Activated CD4-positive, alpha-beta T cell treated with anti-CD3 and anti-CD28 coated beads for 36 hours (primary cell): ENCODE measurements at regions of chr18 and their contacts with region 1.

Region 1: DNA sequence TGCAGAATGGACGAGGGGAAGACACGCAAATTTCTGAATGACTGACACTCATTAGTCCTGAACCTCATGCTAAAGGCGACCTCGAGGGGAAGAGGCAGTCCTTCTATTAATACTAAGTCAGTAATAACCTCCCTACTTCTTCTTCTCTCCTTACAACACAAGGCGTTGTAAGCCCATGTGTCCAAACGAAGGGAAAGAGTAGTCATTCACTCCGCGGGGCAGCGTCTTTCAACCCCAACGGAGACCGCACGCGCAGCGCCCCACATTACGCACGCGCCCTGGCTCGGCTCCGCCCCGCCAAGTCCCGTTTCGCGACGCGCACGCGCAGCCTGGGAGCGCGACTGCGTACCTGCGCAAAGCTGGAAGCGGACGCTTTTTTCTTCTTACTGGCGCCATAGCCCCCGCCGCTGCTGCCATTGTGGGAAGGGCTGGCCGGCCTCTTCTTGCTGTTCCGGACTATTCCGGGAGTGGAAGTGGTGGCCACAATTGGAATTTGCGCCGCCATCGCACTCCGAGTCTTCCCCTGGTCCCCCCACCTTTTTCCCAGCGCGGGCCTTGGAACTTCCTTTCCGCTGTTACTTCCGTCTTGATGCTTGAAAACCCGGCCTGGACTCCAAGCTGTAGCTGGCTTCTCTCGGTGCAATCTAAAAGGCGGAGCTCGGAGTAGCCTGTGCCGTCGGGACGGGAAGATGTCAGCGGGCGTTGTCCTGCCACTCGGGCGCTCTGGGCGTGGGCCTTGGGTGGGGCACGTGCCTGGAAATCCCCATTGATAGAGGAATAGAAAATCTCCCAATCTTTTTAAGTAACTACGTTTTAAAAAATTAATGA is at the start of gene INO80C:
- DNase-seq: peak; percentile 96
- ATAC-seq: peak; percentile 95
- H3K4me3 Mint-ChIP-seq: peak within 1 kb of the TSS; percentile 85
- H3K27ac Mint-ChIP-seq: peak within 1 kb of the TSS; percentile 97
- H3K4me1 Mint-ChIP-seq: peaks cover 33% of the 10 kb centered on the region
- H3K27me3 Mint-ChIP-seq: no peaks in the 10 kb centered on the region
- total RNA-seq, gene INO80C: 30.8 to 37.4 TPM

Region 2: GRCh38 chr18:34976899-34977837 is 520.4 kb before region 1 on chr18:
- CTCF ChIA-PET with region 1: no interaction called
- POLR2A ChIA-PET with region 1: no interaction called
- intact Hi-C with region 1: loop called in 1 of 2 experiments (anchors 2 kb)
- DNase-seq: peak; percentile 85
- ATAC-seq: peak; percentile 55
- H3K4me3 Mint-ChIP-seq: peak overlapping the region; percentile 73
- H3K27ac Mint-ChIP-seq: no peak overlapping the region
- H3K4me1 Mint-ChIP-seq: peaks cover 23% of the 10 kb centered on the region
- H3K27me3 Mint-ChIP-seq: peaks cover 32% of the 10 kb centered on the region

Region 3: GRCh38 chr18:35290073-35290735 is 207.4 kb before region 1 on chr18 and contains the start of gene ZSCAN30:
- CTCF ChIA-PET with region 1: interaction called, 4 read pairs
- POLR2A ChIA-PET with region 1: no interaction called
- intact Hi-C with region 1: loop called (anchors 1 kb)
- DNase-seq: peak; percentile 97
- ATAC-seq: peak; percentile 97
- H3K4me3 Mint-ChIP-seq: peak within 1 kb of the TSS; percentile 96
- H3K27ac Mint-ChIP-seq: peak within 1 kb of the TSS; percentile 96
- H3K4me1 Mint-ChIP-seq: peaks cover 45% of the 10 kb centered on the region
- H3K27me3 Mint-ChIP-seq: no peaks in the 10 kb centered on the region
- total RNA-seq, gene ZSCAN30: 24.2 to 25.4 TPM

Region 4: DNA sequence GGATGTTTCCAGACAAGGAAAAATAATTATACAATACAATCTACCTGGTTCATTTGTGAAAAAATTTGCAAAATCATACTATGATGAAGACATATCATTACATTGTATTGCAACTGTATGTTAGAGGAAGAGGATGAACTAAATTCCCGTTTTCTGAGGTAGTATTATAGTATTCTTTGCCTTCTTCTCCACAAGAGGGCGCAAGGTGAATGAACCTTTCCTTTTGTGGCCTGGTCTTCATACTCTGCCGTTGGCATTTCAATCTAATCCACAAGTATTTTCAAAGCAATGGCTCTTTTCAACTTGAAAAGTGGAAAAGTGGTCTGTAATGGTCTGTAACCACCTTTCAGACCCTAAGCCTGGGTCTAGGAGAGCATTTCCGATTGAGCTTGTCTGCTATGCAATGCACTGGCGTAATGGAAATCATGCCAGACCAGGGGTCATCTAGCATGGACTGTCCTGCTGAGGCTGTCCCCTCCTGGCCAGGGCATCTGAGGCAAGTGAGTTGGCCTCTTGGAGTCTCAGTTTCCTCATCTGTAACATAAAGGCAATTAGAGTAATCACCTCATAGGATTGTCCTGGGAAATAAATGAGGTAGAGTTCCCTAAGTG is 89.6 kb before region 1 on chr18:
- CTCF ChIA-PET with region 1: no interaction called
- POLR2A ChIA-PET with region 1: no interaction called
- intact Hi-C with region 1: loop called in 1 of 2 experiments (anchors 5 kb)
- DNase-seq: peak; percentile 49
- ATAC-seq: peak; percentile 92
- H3K4me3 Mint-ChIP-seq: no peak overlapping the region
- H3K27ac Mint-ChIP-seq: no peak overlapping the region
- H3K4me1 Mint-ChIP-seq: peaks cover 10% of the 10 kb centered on the region
- H3K27me3 Mint-ChIP-seq: peaks cover 6% of the 10 kb centered on the region

Region 5: DNA sequence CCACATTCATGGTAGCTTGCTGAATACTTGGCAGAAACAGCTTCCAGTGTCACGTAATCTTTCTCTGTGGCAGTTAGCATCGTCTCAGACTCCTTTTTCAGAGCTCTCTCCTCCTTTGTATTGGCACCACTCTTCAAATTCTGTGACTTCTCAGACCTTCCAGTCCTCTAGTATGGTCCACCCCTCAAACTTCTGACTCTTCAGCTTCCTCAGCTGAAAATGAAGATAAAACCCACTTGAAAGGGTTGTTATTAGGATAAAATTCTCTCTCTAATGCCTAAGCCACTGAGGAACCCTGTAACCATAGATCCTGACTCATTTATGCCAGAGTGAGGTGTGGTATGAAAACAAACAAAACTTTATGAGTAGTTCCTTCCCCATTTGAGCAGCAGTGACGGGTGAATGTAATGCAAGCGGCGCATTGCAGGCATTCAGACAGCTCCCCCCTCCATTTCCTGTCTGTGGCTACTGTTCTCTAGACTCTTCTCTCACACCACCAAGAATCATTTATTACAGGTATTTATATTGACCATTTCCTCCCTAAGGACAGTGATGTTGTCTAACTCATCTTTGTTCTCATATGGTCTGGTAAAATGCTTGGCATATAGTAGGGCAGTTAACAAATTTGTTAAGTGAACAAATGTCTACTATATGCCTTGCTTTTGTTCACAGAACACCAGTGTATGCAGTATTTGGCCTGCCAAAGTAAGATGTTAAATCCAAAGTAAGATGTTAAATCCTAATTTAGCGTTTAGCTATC is 119.3 kb after region 1 on chr18:
- CTCF ChIA-PET with region 1: no interaction called
- POLR2A ChIA-PET with region 1: interaction called, 5 read pairs
- intact Hi-C with region 1: loop called (anchors 1 to 2 kb)
- DNase-seq: peak; percentile 81
- ATAC-seq: peak; percentile 94
- H3K4me3 Mint-ChIP-seq: no peak overlapping the region
- H3K27ac Mint-ChIP-seq: no peak overlapping the region
- H3K4me1 Mint-ChIP-seq: peaks cover 16% of the 10 kb centered on the region
- H3K27me3 Mint-ChIP-seq: no peaks in the 10 kb centered on the region

Region 6: GRCh38 chr18:35811896-35812295 is 314.3 kb after region 1 on chr18:
- CTCF ChIA-PET with region 1: no interaction called
- POLR2A ChIA-PET with region 1: no interaction called
- intact Hi-C with region 1: no loop called
- DNase-seq: no peak
- ATAC-seq: no peak
- H3K4me3 Mint-ChIP-seq: no peak overlapping the region
- H3K27ac Mint-ChIP-seq: no peak overlapping the region
- H3K4me1 Mint-ChIP-seq: peaks cover 6% of the 10 kb centered on the region
- H3K27me3 Mint-ChIP-seq: peaks cover 14% of the 10 kb centered on the region

Region 7: DNA sequence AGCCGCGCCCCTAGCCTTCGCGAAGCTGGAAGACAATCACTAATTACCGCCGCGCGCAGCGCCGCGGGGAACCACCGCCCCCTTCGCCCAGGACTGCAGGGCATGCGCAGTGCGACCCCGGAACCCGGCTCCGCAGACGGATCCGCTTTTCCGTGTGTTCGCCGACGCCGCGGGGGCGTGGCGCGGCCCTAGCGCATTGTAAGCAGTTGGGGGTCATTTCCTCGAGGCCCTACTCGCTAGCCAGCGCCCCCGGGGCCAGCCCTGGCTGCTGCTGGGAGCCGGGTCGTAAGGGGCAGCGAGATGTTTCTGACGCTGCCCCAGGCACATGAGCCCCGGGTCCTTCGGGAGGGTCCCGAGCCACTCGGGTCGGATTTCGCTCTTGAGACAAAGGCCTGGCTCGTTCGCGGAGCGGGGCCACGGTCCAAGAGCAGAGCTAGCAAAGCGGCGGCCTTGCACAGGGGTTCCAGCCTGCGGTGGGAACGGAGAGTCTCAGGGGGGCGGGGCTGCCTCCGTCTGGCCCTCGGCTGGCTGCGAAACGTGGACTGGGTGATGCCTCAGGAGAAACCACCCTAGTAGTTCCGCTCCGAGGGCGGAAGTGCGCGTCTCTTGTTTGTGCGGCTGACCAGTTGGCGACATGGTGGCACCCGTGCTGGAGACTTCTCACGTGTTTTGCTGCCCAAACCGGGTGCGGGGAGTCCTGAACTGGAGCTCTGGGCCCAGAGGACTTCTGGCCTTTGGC is 631.9 kb after region 1 on chr18 and contains the starts of genes ELP2 and SLC39A6:
- CTCF ChIA-PET with region 1: no interaction called
- POLR2A ChIA-PET with region 1: no interaction called
- intact Hi-C with region 1: loop called (anchors 1 to 2 kb)
- DNase-seq: peak; percentile 97
- ATAC-seq: peak; percentile 94
- H3K4me3 Mint-ChIP-seq: peak within 1 kb of the TSS; percentile 92
- H3K27ac Mint-ChIP-seq: peak within 1 kb of the TSS; percentile 95
- H3K4me1 Mint-ChIP-seq: peaks cover 57% of the 10 kb centered on the region
- H3K27me3 Mint-ChIP-seq: no peaks in the 10 kb centered on the region
- total RNA-seq, gene ELP2: 76.5 to 114 TPM
- total RNA-seq, gene SLC39A6: 23.9 to 28.6 TPM